ENCODE measurements at regions of chr1 and their contacts with region 1.

Region 1: DNA sequence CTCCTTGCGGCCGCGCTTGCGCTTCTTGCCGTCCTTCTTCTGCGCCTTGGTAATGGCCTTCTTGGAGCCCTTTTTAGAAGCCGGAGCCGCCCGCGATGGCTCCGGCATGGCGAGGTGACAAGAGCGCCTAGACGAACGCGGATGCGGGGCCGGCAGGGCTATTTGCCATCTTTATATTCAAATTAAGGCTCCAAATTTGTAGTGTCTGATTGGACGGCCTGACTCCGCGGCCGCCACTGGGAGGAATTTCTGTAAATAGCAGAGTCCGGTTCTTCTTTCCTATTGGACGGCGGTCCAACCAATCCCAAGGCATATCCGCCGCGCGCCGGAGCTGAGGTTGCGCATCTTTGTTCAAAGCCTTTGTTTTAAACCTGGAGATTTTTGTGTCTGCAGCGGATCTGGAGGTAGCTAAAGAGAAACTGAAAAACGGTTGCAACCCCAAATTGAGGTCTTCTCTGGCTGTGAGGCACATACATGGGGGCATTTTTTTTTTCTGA is 22.6 kb upstream of the RNF187 start:
- DNase-seq: peak; percentile 95
- ATAC-seq: peak; percentile 83
- H3K4me3 Mint-ChIP-seq: peak overlapping the region; percentile 84
- H3K27ac Mint-ChIP-seq: peak overlapping the region; percentile 92
- H3K4me1 Mint-ChIP-seq: peaks cover 50% of the 10 kb centered on the region
- H3K27me3 Mint-ChIP-seq: peaks cover 2% of the 10 kb centered on the region

Region 2: DNA sequence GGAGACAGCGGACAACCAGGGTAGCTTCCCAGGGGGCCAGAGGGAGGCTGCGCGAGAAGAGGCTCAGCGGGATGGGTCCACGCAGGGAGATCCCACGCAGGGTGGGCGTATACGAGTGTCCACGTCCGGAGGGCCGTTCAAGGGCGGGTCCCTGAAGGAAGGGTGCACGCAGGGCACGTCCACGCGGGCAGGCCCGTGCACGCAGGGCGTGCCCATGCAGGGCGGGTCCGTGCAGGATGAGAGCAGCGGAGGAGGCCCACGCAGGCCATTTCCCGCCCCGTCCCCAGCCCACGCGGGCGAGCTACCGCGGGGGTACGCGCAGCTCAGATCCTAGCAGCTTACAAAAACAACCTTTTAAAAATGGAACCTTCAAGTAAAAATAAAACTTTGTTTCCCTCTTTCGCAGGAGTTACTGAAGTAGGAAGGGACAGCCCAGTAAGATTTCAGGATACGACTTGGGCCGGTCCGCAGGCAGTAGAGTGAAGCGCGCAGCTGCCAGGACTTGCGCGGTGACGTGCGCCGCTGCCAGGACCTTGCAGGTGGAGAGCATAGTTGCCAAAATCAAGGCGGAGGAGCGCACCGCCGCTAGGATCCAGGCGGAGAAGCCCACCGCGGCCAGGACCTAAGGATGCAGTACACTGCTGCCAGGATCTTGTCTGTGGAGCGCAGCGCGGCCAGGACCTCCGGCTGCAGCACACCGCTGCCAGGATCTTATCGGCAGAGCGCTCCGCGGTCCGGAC is 22.2 kb after region 1 on chr1:
- CTCF ChIA-PET with region 1: interaction called, 13 read pairs
- POLR2A ChIA-PET with region 1: interaction called, 15 read pairs
- intact Hi-C with region 1: loop called (anchors 1 kb)
- DNase-seq: peak; percentile 87
- ATAC-seq: peak; percentile 66
- H3K4me3 Mint-ChIP-seq: peak overlapping the region; percentile 96
- H3K27ac Mint-ChIP-seq: peak overlapping the region; percentile 99
- H3K4me1 Mint-ChIP-seq: peaks cover 40% of the 10 kb centered on the region
- H3K27me3 Mint-ChIP-seq: no peaks in the 10 kb centered on the region